Ascending aorta (tissue), 2 donors: ENCODE measurements at regions of chr1 and their contacts with region 1.

Region 1: DNA sequence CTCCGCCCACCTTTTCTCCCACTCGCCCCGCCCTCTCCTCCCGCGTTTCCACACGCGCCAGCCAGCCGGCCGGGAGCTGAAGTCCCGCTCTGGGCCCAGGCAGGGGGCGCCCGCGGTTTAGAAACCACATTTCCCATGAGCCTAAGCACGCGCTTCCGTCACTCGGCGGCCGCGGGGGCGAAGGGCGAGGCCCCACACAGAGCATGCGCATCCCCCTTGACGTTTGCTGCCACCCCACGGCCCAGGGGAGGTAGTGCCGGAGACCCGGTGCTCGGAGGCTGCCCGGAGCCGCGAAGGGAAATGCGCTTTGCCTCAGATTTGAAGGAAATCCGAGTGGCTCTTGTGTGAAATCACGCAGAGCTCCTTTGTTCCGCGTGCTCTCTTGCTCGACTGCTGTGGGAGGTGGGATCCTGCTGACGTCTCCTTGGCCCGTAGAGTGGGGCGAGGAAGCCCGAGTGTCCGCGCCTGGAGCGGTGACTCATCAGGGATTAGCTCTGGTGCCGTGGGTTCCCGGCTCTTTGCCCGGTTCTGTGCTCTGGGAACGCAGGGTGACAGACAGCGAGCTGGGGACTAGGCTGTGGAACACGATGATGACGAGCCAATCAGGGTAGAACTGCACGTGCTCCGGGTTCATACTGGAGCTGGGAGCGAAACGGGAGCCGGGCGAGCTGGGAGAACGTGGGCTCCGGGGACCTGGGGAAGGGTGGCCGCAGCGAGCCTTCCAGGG is 407 bp upstream of the B3GALNT2 start:
- DNase-seq: peak; percentile 94 to 100
- H3K4me3 ChIP-seq: peak overlapping the region; percentile 75 to 94
- H3K27ac ChIP-seq: peak overlapping the region; percentile 98 to 99
- H3K4me1 ChIP-seq: peaks cover 0 to 20% of the 10 kb centered on the region in 2 donors
- H3K27me3 ChIP-seq: no peaks in the 10 kb centered on the region
- CTCF ChIP-seq: peak; percentile 82 to 95 (median 94)

Region 2: DNA sequence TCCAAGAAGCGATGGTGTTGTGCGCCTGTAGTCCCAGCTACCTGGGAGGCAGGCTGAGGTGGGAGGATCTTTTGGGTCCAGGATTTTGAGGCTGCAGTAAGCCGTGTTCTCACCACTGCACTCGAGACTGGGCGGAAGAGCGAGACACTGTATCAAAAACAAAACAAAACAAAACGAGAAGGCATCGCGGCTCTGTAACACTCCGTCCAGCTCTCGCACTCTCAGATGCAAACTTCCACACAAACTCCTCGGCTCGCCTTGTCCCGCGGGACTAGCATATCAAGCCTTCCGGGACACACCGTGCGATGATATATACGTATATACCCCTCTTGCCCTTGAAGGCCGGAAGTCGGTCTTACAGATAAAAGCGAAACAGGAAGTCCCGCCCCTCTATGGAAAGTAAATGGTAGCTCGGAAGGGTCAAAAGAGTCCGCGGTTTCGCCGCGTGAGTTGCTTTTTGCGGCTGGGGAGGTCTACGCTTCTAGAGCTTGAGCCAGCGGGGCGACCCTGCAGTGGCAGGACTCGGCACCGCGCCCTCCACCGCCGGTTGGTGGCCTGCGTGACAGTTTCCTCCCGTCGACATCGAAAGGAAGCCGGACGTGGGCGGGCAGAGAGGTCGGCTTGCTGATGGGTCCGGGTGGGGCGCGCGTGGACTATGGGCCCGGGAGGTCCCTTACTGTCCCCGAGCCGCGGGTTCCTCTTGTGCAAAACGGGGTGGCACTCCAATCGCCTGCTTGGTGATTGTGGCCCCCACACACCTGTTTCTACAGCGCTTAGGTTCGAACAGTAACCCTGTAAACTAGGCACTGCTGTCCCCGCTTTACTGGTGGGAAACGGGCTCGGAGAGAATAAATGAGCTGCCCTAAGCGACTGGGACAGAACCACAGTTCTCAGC is 1131.3 kb before region 1 on chr1 and contains the start of gene COA6:
- intact Hi-C with region 1: loop called (anchors 2 kb)
- DNase-seq: peak; percentile 60 to 95
- H3K4me3 ChIP-seq: peak within 1 kb of the TSS; percentile 91 to 92
- H3K27ac ChIP-seq: peak within 1 kb of the TSS; percentile 91 to 97
- H3K4me1 ChIP-seq: peaks cover 3 to 15% of the 10 kb centered on the region in 2 donors
- H3K27me3 ChIP-seq: no peaks in the 10 kb centered on the region
- CTCF ChIP-seq: peak in 1 of 3 experiments; percentile 8
- total RNA-seq, gene COA6: not detected

Region 3: DNA sequence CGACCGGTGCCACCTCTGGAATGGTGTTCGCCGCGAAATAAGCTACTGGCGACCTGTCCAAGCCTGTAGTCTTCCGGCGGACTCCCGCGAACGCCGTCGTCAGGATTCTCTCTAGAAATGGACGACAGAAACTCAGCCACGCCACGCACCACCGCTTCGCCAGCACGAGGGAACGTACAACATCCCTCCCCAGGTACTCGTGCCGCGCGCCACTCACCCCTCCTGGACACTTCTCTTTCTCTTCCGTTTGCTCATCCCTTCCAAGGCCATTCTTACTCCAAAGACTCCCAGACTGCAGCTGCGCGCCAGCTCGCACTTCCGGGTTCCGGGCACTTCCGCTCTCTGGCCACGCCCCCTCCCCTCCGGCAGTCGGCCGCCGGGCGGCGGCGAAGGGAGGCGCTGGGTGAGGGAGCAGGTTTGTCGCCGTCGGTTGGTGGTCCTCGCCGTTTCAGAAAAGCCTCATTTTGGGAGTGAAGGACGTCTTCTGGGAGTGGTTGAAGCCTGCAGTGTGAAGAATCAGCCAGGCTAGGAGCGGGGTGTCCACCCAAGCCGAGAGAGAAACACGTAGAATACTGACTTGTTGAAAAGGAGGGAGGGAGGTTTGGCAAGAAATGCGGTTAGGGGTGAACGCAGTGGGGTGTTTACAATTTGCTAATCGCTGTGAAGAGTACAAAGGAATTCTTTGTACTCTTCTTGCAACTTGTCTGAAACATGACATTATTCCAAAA is 343.5 kb before region 1 on chr1 and contains the start of gene RBM34:
- intact Hi-C with region 1: loop called (anchors 2 kb)
- DNase-seq: peak; percentile 64 to 95
- H3K4me3 ChIP-seq: peak within 1 kb of the TSS; percentile 67 to 86
- H3K27ac ChIP-seq: peak within 1 kb of the TSS; percentile 85
- H3K4me1 ChIP-seq: peaks cover 6 to 9% of the 10 kb centered on the region in 2 donors
- H3K27me3 ChIP-seq: no peaks in the 10 kb centered on the region
- CTCF ChIP-seq: peak in 2 of 3 experiments; percentile 15 to 35
- total RNA-seq, gene RBM34: 53.6 TPM

Region 4: GRCh38 chr1:235473806-235474205 is 30.9 kb before region 1 on chr1:
- intact Hi-C with region 1: no loop called
- DNase-seq: no peak
- H3K4me3 ChIP-seq: no peak overlapping the region
- H3K27ac ChIP-seq: no peak overlapping the region
- H3K4me1 ChIP-seq: no peaks in the 10 kb centered on the region
- H3K27me3 ChIP-seq: no peaks in the 10 kb centered on the region
- CTCF ChIP-seq: no peak

Region 5: DNA sequence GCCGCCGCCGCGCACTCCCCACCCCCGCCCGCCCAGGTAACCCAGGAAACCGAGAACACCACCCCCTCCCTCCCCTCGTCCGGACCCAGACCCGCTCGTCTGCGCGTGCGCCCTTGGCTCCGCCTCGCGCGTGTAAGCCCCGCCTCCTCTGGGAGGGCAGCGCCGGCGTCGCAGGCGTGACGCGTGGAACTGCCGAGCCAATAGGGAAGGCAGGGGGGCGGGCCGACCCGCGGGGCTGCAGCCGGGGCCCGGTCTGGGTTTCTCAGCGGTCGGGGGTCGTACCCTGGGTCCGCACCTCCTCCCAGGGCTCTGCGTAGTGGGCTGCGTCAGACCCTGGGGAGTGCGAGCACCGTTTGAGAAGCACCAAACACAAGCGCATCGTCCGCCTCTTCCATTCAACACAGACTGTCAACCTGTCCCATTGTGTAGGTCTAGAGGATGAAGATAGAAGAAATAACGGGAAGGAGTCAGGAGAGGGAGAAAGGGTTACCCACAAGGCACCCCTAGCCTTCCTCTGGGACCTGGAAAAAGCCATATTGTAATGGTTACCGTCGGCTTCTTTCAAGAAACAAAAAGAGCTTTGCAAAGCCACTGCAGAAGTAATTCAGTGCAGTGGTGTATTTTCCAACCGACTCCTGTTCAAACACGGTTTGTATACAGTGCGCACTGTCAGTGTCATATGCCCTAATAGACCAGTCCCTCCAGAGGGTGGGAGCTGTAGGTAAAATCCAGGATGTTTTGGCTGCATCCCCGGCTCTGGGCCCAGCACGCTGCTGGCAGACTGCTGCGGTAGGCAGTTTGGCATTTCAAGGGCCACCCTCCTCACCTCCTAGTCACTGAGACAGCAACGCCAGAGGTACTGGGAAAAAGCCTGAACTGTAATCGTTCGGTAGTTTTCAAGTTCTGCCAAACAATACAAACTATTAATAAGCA is 362.5 kb after region 1 on chr1:
- intact Hi-C with region 1: loop called (anchors 2 kb)
- DNase-seq: peak; percentile 88 to 98
- H3K4me3 ChIP-seq: peak overlapping the region; percentile 84 to 95
- H3K27ac ChIP-seq: peak overlapping the region; percentile 92 to 93
- H3K4me1 ChIP-seq: peaks cover 0 to 10% of the 10 kb centered on the region in 2 donors
- H3K27me3 ChIP-seq: no peaks in the 10 kb centered on the region
- CTCF ChIP-seq: no peak

Region 6: GRCh38 chr1:236064674-236065508 is 560.2 kb after region 1 on chr1 and contains the start of gene NID1:
- intact Hi-C with region 1: loop called (anchors 2 kb)
- DNase-seq: peak; percentile 56 to 92
- H3K4me3 ChIP-seq: peak within 1 kb of the TSS; percentile 77 to 81
- H3K27ac ChIP-seq: peak within 1 kb of the TSS; percentile 91 to 95
- H3K4me1 ChIP-seq: peaks cover 0 to 15% of the 10 kb centered on the region in 2 donors
- H3K27me3 ChIP-seq: no peaks in the 10 kb centered on the region
- CTCF ChIP-seq: peak; percentile 35 to 48 (median 38)
- total RNA-seq, gene NID1: 172 TPM

Region 7: GRCh38 chr1:236795035-236795756 is 1290.5 kb after region 1 on chr1 and contains the start of gene MTR:
- intact Hi-C with region 1: loop called (anchors 5 kb)
- DNase-seq: peak; percentile 95 to 99
- H3K4me3 ChIP-seq: peak within 1 kb of the TSS; percentile 89 to 96
- H3K27ac ChIP-seq: peak within 1 kb of the TSS; percentile 92 to 97
- H3K4me1 ChIP-seq: peaks cover 0 to 25% of the 10 kb centered on the region in 2 donors
- H3K27me3 ChIP-seq: no peaks in the 10 kb centered on the region
- CTCF ChIP-seq: no peak
- total RNA-seq, gene MTR: 36.1 TPM